ENCODE measurements at regions of chr5 and their contacts with region 1.

Region 1: DNA sequence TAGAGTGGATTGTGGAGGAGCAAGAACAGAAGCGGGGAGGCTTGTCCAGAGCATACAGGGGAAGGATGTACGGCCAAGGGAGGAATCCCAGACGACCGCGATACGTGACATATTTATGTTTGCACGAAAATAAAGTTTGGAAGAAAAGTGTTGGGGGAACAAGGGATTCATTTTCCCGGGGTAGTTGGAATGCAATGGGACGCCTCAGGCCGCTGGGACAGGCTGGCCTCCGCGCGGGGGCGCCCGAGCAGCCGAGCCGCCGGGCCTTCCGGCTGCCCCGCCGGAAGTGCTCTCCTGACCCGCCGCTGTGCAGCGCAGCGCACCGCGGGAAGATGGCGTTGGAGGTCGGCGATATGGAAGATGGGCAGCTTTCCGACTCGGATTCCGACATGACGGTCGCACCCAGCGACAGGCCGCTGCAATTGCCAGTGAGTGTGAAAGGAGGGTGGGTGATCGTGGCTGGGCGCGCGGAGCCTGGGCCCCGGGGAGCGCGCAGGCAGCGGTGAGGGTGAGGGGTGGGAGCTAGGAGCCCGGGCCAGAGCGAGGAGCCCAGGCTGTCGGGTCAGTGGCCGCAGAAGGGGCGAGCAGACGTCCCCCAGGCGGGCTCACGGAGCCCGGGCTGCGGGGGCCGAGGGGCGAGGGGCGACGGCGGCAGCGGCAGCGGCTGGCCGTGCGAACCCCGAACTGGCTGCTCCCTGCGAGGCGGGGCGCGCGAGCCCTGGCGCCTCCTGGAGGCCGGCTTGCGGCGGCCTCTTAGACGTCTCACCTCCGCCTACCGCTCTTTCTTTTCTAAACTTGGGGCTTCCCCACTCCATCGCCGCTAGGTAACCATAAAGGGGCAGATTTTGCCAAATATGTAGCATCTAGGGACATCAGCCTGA is at the start of gene PHAX:
- DNase-seq: no peak
- H3K4me3 ChIP-seq: peak within 1 kb of the TSS; percentile 96
- CTCF ChIP-seq: peak; percentile 76

Region 2: GRCh38 chr5:125486634-125487033 is 1114.2 kb before region 1 on chr5:
- CTCF ChIA-PET with region 1: no interaction called
- POLR2A ChIA-PET with region 1: no interaction called
- DNase-seq: peak; percentile 26
- H3K4me3 ChIP-seq: no peak overlapping the region
- CTCF ChIP-seq: no peak

Region 3: GRCh38 chr5:125756456-125756855 is 844.4 kb before region 1 on chr5:
- CTCF ChIA-PET with region 1: no interaction called
- POLR2A ChIA-PET with region 1: no interaction called
- DNase-seq: no peak
- H3K4me3 ChIP-seq: no peak overlapping the region
- CTCF ChIP-seq: no peak

Region 4: DNA sequence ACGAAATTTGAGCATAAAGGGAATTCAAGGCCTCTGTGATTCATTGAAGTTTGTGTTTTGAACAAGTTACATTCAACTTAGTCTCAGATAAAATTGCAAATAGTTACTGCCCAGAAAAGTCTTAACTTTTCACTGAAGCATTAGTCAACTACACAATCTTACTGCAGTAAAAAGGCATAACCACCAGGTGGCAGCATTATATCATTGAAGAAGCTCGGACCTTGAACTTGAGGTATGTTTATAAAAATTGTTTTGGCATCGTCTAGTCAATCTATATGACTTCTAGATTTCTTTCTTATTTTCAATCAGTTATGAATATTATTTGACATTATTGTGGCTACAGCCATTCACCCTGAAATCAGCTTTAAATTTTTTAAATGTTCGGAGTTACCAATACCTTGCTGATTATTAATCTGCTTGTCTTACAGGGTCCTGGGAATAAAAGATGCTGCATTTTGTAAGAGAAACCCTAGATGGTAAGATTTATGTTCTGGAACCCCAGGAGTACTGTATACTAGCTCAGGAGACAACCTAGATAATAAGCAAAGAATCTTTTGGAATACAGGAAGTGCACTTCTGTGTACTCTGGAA is 261.6 kb before region 1 on chr5:
- CTCF ChIA-PET with region 1: interaction called, 57 read pairs
- POLR2A ChIA-PET with region 1: no interaction called
- DNase-seq: peak; percentile 41
- H3K4me3 ChIP-seq: no peak overlapping the region
- CTCF ChIP-seq: peak; percentile 46

Region 5: GRCh38 chr5:126422989-126423788 is 177.7 kb before region 1 on chr5 and contains the start of gene GRAMD2B:
- CTCF ChIA-PET with region 1: no interaction called
- POLR2A ChIA-PET with region 1: no interaction called
- DNase-seq: peak; percentile 46
- H3K4me3 ChIP-seq: peak within 1 kb of the TSS; percentile 75
- CTCF ChIP-seq: no peak

Region 6: GRCh38 chr5:126579716-126580115 is 21.2 kb before region 1 on chr5:
- CTCF ChIA-PET with region 1: interaction called, 17 read pairs
- POLR2A ChIA-PET with region 1: no interaction called
- DNase-seq: no peak
- H3K4me3 ChIP-seq: no peak overlapping the region
- CTCF ChIP-seq: no peak

Region 7: DNA sequence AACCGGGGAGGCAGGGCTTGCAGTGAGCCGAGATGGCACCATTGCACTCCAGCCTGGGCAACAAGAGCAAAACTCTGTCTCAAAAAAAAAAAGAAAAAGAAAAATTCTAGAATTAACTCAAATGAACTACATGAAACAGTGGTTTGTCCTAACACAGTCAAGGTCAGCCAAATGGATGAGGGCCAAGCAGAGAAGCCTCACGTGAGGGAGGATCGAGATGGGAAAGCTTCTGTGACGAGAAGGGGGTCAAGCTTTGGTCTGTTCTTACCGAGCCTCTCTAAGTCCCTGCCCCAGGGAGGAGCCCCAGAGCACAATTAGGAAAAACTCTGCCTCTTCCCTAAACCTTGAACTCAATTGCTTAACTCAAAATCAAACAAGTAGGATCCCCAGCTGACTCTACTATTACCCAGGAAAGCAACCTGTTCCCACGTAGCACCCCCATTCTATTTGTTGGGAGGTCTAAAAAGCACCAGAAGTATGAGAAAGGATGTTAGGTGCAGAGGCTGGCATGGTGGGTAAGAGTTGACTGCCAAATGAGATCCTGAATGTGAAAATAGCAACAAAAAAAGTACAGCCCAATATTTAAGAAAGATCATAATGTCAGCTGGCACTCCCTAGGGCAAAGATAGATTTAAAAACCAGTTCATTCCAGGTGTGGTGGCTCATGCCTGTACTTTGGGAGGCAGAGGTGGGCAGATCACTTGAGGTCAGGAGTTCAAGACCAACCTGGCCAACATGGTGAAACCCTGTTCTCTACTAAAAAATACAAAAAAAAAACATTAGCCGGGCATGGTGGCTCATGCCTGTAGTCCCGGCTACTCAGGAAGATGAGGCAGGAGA is 13.1 kb before region 1 on chr5:
- CTCF ChIA-PET with region 1: interaction called, 20 read pairs
- POLR2A ChIA-PET with region 1: no interaction called
- DNase-seq: no peak
- H3K4me3 ChIP-seq: no peak overlapping the region
- CTCF ChIP-seq: no peak

Region 8: GRCh38 chr5:126624534-126624933 is 23.7 kb after region 1 on chr5:
- CTCF ChIA-PET with region 1: interaction called, 20 read pairs
- POLR2A ChIA-PET with region 1: interaction called, 3 read pairs
- DNase-seq: peak; percentile 87
- H3K4me3 ChIP-seq: no peak overlapping the region
- CTCF ChIP-seq: no peak

Measured in AG04449 (cell line).